Dorsolateral prefrontal cortex (tissue), 120 donors: ENCODE measurements at regions of chr12 and their contacts with region 1.

Region 1: DNA sequence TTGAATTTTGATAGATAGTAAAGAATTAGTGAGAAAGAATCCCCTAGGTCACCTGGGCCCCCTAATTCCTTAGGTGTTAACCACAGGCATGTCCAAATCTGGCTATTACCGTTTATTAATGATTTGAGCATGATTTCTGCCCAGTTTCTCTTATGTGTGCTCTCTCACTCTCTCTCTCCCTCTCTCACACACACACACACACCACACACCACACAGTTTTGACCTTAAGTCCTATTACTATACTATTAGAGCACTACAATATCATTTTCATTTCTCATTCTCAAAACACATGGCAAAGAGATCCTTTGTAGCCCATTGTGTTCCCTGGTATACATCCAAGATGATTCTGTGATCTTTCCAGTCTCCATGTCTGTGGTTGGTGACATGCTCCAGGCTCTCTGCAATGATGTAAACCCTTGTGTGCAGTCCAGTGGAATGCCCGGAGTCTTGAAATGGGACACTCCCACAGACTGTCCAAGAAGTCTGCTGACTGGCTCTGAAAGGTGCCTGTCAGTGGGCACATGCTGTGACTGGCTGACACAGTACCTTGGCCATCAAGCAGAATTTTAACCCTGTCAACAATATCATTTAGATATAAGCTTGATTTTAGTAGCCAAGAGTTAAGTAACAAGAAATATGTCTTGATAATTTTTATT is 96.2 kb downstream of the FIGNL2 start:
- DNase-seq: peak; percentile 63 to 95 (median 85)
- H3K4me3 ChIP-seq: peak overlapping the region in 20 of 59 donors; percentile 0 to 33 (median 19)
- H3K27ac ChIP-seq: peak overlapping the region; percentile 48 to 95 (median 88)
- H3K27me3 ChIP-seq: no peaks in the 10 kb centered on the region
- CTCF ChIP-seq: peak in 2 of 56 donors; percentile 7 to 22

Region 2: GRCh38 chr12:51460519-51460918 is 291.8 kb before region 1 on chr12:
- intact Hi-C with region 1: no loop called
- DNase-seq: no peak
- H3K4me3 ChIP-seq: no peak overlapping the region
- H3K27ac ChIP-seq: peak overlapping the region in 38 of 59 donors; percentile 1 to 71 (median 40)
- H3K27me3 ChIP-seq: no peaks in the 10 kb centered on the region
- CTCF ChIP-seq: no peak

Region 3: GRCh38 chr12:51590347-51591019 is 161.9 kb before region 1 on chr12:
- intact Hi-C with region 1: loop called (anchors 5 kb)
- DNase-seq: peak in 9 of 10 donors; percentile 45 to 78 (median 69)
- H3K4me3 ChIP-seq: peak overlapping the region; percentile 42 to 91 (median 64)
- H3K27ac ChIP-seq: peak overlapping the region in 39 of 59 donors; percentile 8 to 87 (median 65)
- H3K27me3 ChIP-seq: no peaks in the 10 kb centered on the region
- CTCF ChIP-seq: peak in 45 of 56 donors; percentile 6 to 76 (median 55)

Region 4: GRCh38 chr12:51687614-51688013 is 64.7 kb before region 1 on chr12:
- intact Hi-C with region 1: loop called in 1 of 2 experiments (anchors 5 kb)
- DNase-seq: no peak
- H3K4me3 ChIP-seq: no peak overlapping the region
- H3K27ac ChIP-seq: no peak overlapping the region
- H3K27me3 ChIP-seq: no peaks in the 10 kb centered on the region
- CTCF ChIP-seq: no peak

Region 5: GRCh38 chr12:51823875-51824565 is 71.7 kb after region 1 on chr12:
- intact Hi-C with region 1: loop called in 1 of 2 experiments (anchors 5 kb)
- DNase-seq: peak in 6 of 10 donors; percentile 39 to 69 (median 53)
- H3K4me3 ChIP-seq: no peak overlapping the region
- H3K27ac ChIP-seq: peak overlapping the region in 2 of 59 donors; percentile 10 to 18
- H3K27me3 ChIP-seq: no peaks in the 10 kb centered on the region
- CTCF ChIP-seq: peak in 55 of 56 donors; percentile 46 to 81 (median 65)